IMR-90 (cell line): ENCODE measurements at regions of chr1 and their contacts with region 1.

Region 1: GRCh38 chr1:167066333-167067122 is 23.6 kb downstream of the GPA33 start:
- DNase-seq: peak; percentile 15
- ATAC-seq: peak; percentile 98
- H3K4me3 ChIP-seq: peak overlapping the region; percentile 23; the same call in 1 of the 2 replicates
- H3K27ac ChIP-seq: no peak overlapping the region
- H3K4me1 ChIP-seq: no peaks in the 10 kb centered on the region
- H3K27me3 ChIP-seq: peaks cover 15% of the 10 kb centered on the region
- CTCF ChIP-seq: peak; percentile 91
- POLR2A ChIP-seq: no peak
- RAD21 ChIP-seq: peak; percentile 92

Region 2: DNA sequence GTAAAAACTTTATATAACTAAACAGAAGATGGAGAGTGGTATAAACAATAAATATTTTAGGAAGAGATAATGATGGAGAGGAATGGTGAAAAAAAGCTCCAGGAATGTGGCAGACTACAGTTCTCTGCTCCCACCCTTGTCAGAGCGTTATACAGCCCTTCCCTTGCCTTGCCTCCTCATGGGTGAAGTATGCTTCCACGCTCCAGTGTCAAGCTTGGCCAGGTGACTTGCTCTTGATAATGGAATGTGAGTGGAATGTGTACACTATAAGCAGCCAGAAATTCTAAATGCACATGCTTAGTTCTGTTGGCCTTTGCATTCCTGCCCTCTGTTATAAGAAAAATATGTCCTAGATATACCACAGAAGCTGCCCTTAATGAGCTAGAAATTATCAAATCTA is 251.9 kb before region 1 on chr1:
- CTCF ChIA-PET with region 1: no interaction called
- POLR2A ChIA-PET with region 1: no interaction called
- dilution Hi-C with region 1: no loop called
- in situ Hi-C with region 1: no loop called
- intact Hi-C with region 1: no loop called
- DNase-seq: peak; percentile 37
- ATAC-seq: peak; percentile 44
- H3K4me3 ChIP-seq: no peak overlapping the region
- H3K27ac ChIP-seq: no peak overlapping the region
- H3K4me1 ChIP-seq: no peaks in the 10 kb centered on the region
- H3K27me3 ChIP-seq: no peaks in the 10 kb centered on the region
- CTCF ChIP-seq: no peak
- POLR2A ChIP-seq: no peak
- RAD21 ChIP-seq: no peak

Region 3: DNA sequence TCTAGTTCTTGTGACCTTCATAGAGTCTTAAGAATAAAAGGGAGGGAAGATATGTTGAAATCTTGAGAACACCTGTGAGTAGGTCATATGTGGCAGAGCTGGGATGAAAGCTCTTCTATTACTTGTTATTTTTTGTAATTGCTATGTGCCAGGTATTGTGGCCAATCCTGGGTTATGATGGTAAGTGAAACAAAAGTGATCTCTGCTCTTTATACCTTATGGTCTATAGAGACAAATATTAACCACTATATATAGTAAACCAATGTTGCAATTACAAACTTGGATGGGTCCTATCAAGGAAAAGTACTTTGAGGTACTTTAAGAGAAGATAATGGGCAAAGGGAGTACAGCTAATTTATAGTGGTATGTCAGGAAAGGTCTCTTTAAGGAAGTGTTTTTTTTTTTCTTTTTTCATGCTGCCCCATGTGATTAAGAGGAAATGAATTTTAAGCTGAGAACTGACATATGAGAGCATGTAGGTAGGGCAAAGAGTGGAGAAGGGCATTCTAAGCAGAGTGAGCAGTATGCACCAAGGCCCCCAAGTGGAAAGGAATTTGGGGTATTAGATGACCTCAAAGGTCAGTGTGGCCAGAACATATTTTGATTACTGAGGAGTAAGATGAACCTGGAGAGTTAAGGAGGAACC is 197.4 kb after region 1 on chr1:
- CTCF ChIA-PET with region 1: no interaction called
- POLR2A ChIA-PET with region 1: no interaction called
- dilution Hi-C with region 1: no loop called
- in situ Hi-C with region 1: no loop called
- intact Hi-C with region 1: loop called (anchors 1 kb)
- DNase-seq: no peak
- ATAC-seq: no peak
- H3K4me3 ChIP-seq: no peak overlapping the region
- H3K27ac ChIP-seq: no peak overlapping the region
- H3K4me1 ChIP-seq: peaks cover under 1% of the 10 kb centered on the region; the same call in 1 of the 2 replicates
- H3K27me3 ChIP-seq: no peaks in the 10 kb centered on the region
- CTCF ChIP-seq: no peak
- POLR2A ChIP-seq: no peak
- RAD21 ChIP-seq: no peak

Region 4: DNA sequence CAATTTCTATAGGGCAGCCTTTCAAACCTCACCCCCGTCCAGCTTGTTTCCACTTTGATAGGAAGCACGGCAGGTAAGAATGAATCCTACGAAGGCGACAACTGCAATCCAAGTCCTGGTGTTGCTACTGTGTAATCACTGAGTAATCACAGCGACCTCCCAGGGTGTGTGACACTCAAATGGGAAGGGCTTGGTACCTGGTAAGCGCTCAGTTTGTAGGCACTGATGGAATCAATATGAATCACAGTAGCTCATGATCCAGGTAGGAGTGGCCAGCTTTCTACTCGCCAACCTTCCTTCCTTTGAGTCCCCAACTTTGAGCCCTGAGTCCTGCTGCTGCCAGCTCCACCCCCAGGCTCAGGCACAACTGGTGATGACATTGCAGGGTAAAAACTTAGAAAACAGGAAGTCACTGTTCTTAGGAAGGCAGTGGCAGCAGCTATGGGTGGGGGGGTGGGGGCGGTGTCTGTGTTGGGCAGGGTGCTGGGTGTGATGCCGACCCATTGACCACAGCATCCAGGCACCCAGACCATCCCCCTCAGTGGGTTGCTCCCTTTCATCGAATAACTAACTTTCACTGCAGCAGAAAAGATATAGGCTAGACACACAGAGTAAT is 381.1 kb after region 1 on chr1:
- CTCF ChIA-PET with region 1: no interaction called
- POLR2A ChIA-PET with region 1: no interaction called
- dilution Hi-C with region 1: no loop called
- in situ Hi-C with region 1: loop called (anchors 5 kb)
- intact Hi-C with region 1: loop called (anchors 1 kb)
- DNase-seq: no peak
- ATAC-seq: no peak
- H3K4me3 ChIP-seq: no peak overlapping the region
- H3K27ac ChIP-seq: no peak overlapping the region
- H3K4me1 ChIP-seq: no peaks in the 10 kb centered on the region
- H3K27me3 ChIP-seq: peaks cover 22% of the 10 kb centered on the region
- CTCF ChIP-seq: no peak
- POLR2A ChIP-seq: no peak
- RAD21 ChIP-seq: no peak